ENCODE measurements at regions of chr14 and their contacts with region 1.

Region 1: GRCh38 chr14:89303457-89304435 is 113.3 kb downstream of the FOXN3 start:
- DNase-seq: peak; percentile 3
- H3K4me3 ChIP-seq: no peak overlapping the region
- H3K27ac ChIP-seq: no peak overlapping the region
- H3K4me1 ChIP-seq: no peaks in the 10 kb centered on the region
- H3K27me3 ChIP-seq: no peaks in the 10 kb centered on the region
- CTCF ChIP-seq: no peak

Region 2: DNA sequence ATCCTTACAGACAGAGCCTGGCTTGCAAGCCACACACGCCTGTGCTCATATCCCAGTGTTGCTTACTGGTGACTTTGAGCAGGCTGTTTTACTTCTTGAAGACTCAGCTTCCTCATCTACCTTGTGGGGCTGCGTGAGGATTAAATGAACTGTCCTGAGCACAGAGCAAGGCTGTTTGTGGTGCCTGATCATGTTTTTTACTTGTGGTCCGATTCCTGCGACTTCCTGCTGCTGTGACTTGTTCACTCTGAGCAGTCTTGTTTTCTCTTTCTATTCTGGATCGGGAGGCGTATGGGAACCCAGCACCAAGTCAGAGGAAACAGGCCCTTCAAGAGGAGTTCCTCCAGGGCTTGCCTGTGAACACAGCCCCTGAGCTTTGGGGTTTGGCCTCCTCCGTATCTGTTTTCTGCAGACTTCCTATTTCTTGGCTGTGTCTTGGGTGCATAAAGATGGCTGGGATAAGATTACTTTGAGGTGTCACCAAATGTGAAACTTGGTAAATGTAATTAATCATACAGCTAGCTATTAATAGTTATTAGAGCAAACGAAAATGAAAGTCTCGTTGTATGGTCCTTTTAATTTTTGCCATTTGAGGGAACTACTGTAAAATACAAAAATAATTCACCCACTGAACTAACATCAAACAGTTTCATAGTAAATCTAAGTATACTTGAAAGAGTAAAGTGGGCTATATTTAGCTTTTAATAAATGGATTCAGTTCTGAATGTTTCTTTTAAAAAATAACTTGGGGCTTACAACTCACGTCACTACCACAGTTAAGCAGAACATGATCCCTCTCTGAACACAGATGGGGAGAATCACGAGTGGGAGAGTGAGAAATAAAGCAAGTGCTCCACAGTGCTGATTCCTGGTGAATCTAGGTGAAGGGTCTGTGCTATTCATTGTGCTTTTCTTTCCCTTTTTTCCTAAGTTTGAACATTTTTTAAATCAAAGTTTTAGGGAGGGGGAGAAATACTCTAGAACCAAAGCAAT is 138.3 kb before region 1 on chr14:
- CTCF ChIA-PET with region 1: no interaction called
- dilution Hi-C with region 1: no loop called
- in situ Hi-C with region 1: no loop called
- intact Hi-C with region 1: no loop called
- DNase-seq: no peak
- H3K4me3 ChIP-seq: no peak overlapping the region
- H3K27ac ChIP-seq: no peak overlapping the region
- H3K4me1 ChIP-seq: no peaks in the 10 kb centered on the region
- H3K27me3 ChIP-seq: no peaks in the 10 kb centered on the region
- CTCF ChIP-seq: no peak

Region 3: GRCh38 chr14:89252887-89253547 is 50.7 kb before region 1 on chr14:
- CTCF ChIA-PET with region 1: no interaction called
- dilution Hi-C with region 1: loop called (anchors 5 kb)
- in situ Hi-C with region 1: no loop called
- intact Hi-C with region 1: no loop called
- DNase-seq: no peak
- H3K4me3 ChIP-seq: no peak overlapping the region
- H3K27ac ChIP-seq: no peak overlapping the region
- H3K4me1 ChIP-seq: no peaks in the 10 kb centered on the region
- H3K27me3 ChIP-seq: no peaks in the 10 kb centered on the region
- CTCF ChIP-seq: peak in 1 of 2 donors; percentile 30

Region 4: GRCh38 chr14:89351516-89352404 is 48.0 kb after region 1 on chr14:
- CTCF ChIA-PET with region 1: no interaction called
- dilution Hi-C with region 1: loop called (anchors 5 kb)
- in situ Hi-C with region 1: no loop called
- intact Hi-C with region 1: no loop called
- DNase-seq: no peak
- H3K4me3 ChIP-seq: no peak overlapping the region
- H3K27ac ChIP-seq: no peak overlapping the region
- H3K4me1 ChIP-seq: no peaks in the 10 kb centered on the region
- H3K27me3 ChIP-seq: no peaks in the 10 kb centered on the region
- CTCF ChIP-seq: no peak

Region 5: DNA sequence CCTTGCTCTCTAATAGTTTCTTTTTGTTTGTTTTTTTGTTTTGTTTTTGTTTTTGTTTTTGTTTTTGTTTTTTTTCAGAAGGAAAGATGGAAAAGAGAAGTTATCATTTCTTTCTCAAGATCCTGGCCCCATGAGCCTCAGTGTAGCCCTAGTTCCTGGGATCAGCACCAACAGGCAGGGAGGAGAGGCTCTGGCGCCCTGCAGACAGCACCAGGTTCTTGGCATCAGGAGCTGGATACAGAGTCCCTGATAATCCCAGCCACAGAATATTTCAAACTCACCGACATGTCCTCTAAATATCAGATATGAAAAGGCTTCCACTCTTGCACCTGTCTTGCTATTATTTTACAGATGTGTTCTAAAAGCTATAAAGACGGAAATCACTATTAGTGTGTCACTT is 60.6 kb after region 1 on chr14:
- CTCF ChIA-PET with region 1: no interaction called
- dilution Hi-C with region 1: no loop called
- in situ Hi-C with region 1: no loop called
- intact Hi-C with region 1: no loop called
- DNase-seq: no peak
- H3K4me3 ChIP-seq: no peak overlapping the region
- H3K27ac ChIP-seq: no peak overlapping the region
- H3K4me1 ChIP-seq: no peaks in the 10 kb centered on the region
- H3K27me3 ChIP-seq: no peaks in the 10 kb centered on the region
- CTCF ChIP-seq: no peak